ENCODE measurements at regions of chr5 and their contacts with region 1.

Region 1: DNA sequence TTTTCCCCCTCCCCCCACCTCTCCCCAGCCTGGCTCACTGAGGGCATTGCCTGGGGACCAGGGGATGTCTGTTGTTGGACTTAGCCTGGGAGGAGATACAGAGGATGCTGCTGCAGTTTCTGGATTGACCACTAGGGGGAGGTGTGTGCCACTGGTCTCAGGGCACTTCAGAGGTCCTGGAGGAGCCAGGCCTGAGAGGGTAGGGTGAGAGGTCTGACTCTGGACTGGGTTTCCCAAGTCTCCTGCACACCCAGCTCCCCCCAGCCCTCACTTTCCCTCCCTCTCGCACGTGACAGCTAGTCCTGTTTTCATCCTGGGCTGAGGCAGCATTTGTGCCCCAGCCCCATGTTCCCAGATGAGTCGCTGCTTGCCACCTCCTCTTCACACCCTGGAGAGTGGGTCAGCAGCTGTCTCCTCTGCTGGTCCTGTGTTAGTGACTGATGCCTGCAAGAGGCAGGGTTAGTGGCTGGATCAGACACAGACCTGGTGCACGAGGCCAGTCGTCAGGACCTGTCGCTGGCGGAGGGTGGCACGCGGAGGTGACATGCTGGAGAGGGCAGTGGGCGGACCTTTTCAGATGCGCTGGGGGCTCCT is 4.4 kb downstream of the IL3 start:
- DNase-seq: peak; percentile 64
- ATAC-seq: peak; percentile 86
- H3K4me3 Mint-ChIP-seq: no peak overlapping the region
- H3K27ac Mint-ChIP-seq: no peak overlapping the region
- H3K4me1 Mint-ChIP-seq: peaks cover 8% of the 10 kb centered on the region
- H3K27me3 Mint-ChIP-seq: no peaks in the 10 kb centered on the region
- CTCF ChIP-seq: peak; percentile 35

Region 2: GRCh38 chr5:131589510-131590348 is 475.1 kb before region 1 on chr5:
- CTCF ChIA-PET with region 1: interaction called, 94 read pairs
- POLR2A ChIA-PET with region 1: no interaction called
- intact Hi-C with region 1: loop called (anchors 1 kb)
- DNase-seq: no peak
- ATAC-seq: peak; percentile 57
- H3K4me3 Mint-ChIP-seq: no peak overlapping the region
- H3K27ac Mint-ChIP-seq: no peak overlapping the region
- H3K4me1 Mint-ChIP-seq: peaks cover 25% of the 10 kb centered on the region
- H3K27me3 Mint-ChIP-seq: no peaks in the 10 kb centered on the region
- CTCF ChIP-seq: peak; percentile 48

Region 3: DNA sequence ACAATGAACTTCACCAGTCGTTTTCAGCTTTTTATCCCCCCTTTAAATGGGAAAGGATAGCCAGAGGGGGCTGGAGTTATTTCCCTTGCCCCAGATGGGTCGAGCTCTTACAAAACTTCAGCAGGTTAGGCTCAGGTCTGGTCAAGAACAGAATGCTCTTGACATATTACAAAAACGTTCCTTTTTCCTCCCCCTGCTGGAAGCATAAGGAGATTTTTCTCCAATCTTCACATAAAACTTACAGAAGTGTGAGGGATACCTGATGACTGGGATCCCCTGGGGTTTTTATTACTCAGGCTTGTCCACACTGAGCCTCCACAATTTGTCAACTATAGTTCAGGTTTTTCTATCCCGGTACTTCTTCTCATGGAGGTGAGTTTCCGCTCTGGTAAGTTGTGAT is 69.5 kb after region 1 on chr5:
- CTCF ChIA-PET with region 1: interaction called, 8 read pairs
- POLR2A ChIA-PET with region 1: no interaction called
- intact Hi-C with region 1: loop called (anchors 1 kb)
- DNase-seq: no peak
- ATAC-seq: no peak
- H3K4me3 Mint-ChIP-seq: no peak overlapping the region
- H3K27ac Mint-ChIP-seq: no peak overlapping the region
- H3K4me1 Mint-ChIP-seq: no peaks in the 10 kb centered on the region
- H3K27me3 Mint-ChIP-seq: peaks cover 8% of the 10 kb centered on the region
- CTCF ChIP-seq: no peak

Region 4: GRCh38 chr5:132180134-132180745 is 115.4 kb after region 1 on chr5:
- CTCF ChIA-PET with region 1: interaction called, 7 read pairs
- POLR2A ChIA-PET with region 1: no interaction called
- intact Hi-C with region 1: loop called (anchors 1 kb)
- DNase-seq: no peak
- ATAC-seq: peak; percentile 36
- H3K4me3 Mint-ChIP-seq: no peak overlapping the region
- H3K27ac Mint-ChIP-seq: no peak overlapping the region
- H3K4me1 Mint-ChIP-seq: peaks cover 24% of the 10 kb centered on the region
- H3K27me3 Mint-ChIP-seq: no peaks in the 10 kb centered on the region
- CTCF ChIP-seq: no peak

Region 5: GRCh38 chr5:132238169-132238744 is 173.4 kb after region 1 on chr5:
- CTCF ChIA-PET with region 1: interaction called, 8 read pairs
- POLR2A ChIA-PET with region 1: no interaction called
- intact Hi-C with region 1: loop called (anchors 1 kb)
- DNase-seq: peak; percentile 59
- ATAC-seq: peak; percentile 90
- H3K4me3 Mint-ChIP-seq: no peak overlapping the region
- H3K27ac Mint-ChIP-seq: no peak overlapping the region
- H3K4me1 Mint-ChIP-seq: no peaks in the 10 kb centered on the region
- H3K27me3 Mint-ChIP-seq: peaks cover 4% of the 10 kb centered on the region
- CTCF ChIP-seq: no peak

Region 6: GRCh38 chr5:132807163-132807838 is 742.5 kb after region 1 on chr5:
- CTCF ChIA-PET with region 1: no interaction called
- POLR2A ChIA-PET with region 1: no interaction called
- intact Hi-C with region 1: no loop called
- DNase-seq: no peak
- ATAC-seq: no peak
- H3K4me3 Mint-ChIP-seq: no peak overlapping the region
- H3K27ac Mint-ChIP-seq: no peak overlapping the region
- H3K4me1 Mint-ChIP-seq: peaks cover 11% of the 10 kb centered on the region
- H3K27me3 Mint-ChIP-seq: peaks cover 53% of the 10 kb centered on the region
- CTCF ChIP-seq: no peak

Region 7: GRCh38 chr5:133196441-133197085 is 1131.7 kb after region 1 on chr5:
- CTCF ChIA-PET with region 1: no interaction called
- POLR2A ChIA-PET with region 1: no interaction called
- intact Hi-C with region 1: no loop called
- DNase-seq: no peak
- ATAC-seq: no peak
- H3K4me3 Mint-ChIP-seq: no peak overlapping the region
- H3K27ac Mint-ChIP-seq: no peak overlapping the region
- H3K4me1 Mint-ChIP-seq: no peaks in the 10 kb centered on the region
- H3K27me3 Mint-ChIP-seq: peaks cover 7% of the 10 kb centered on the region
- CTCF ChIP-seq: no peak

Measured in activated B cell treated with CpG ODN at 0.5 μM for 24 hours (primary cell).